ENCODE measurements at regions of chr17 and their contacts with region 1.

Region 1: GRCh38 chr17:68613739-68614298 is 12.7 kb upstream of the FAM20A start:
- DNase-seq: peak; percentile 29
- ATAC-seq: peak; percentile 41 to 67

Region 2: GRCh38 chr17:68318103-68318991 is 295.5 kb before region 1 on chr17:
- intact Hi-C with region 1: no loop called
- DNase-seq: no peak
- ATAC-seq: peak in 1 of 2 donors; percentile 78

Region 3: GRCh38 chr17:68539548-68540467 is 74.0 kb before region 1 on chr17:
- intact Hi-C with region 1: loop called in 1 of 2 experiments (anchors 10 kb)
- DNase-seq: no peak
- ATAC-seq: peak in 1 of 2 donors; percentile 17